Tibial artery (tissue), 4 donors: ENCODE measurements at regions of chr10 and their contacts with region 1.

Region 1: DNA sequence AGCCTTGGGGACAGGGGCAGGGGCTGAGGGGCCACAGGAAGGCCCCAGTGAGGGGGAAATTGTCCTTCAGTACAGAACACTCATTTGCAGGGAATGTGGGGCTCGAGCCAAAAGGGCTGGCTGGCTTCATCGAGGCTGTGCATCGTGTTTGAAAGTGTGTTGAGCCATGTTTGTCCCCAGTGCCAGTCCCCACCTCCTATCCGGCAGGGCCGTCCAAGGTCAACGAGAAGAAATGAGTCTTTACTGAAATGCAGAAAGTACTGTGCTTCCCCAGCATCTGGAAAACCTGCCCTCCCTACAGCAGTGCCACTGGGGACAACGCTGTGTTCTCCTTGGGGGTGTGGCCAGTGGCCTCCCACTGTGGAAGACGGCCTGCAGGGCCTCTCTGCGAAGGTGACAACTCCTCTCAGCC is 214.1 kb downstream of the KLF6 start:
- DNase-seq: peak; percentile 34 to 74
- H3K4me3 ChIP-seq: no peak overlapping the region
- H3K27ac ChIP-seq: peak overlapping the region; percentile 17 to 32
- H3K4me1 ChIP-seq: peaks cover 0 to 20% (median 11%) of the 10 kb centered on the region in 4 donors
- H3K27me3 ChIP-seq: no peaks in the 10 kb centered on the region
- CTCF ChIP-seq: no peak

Region 2: DNA sequence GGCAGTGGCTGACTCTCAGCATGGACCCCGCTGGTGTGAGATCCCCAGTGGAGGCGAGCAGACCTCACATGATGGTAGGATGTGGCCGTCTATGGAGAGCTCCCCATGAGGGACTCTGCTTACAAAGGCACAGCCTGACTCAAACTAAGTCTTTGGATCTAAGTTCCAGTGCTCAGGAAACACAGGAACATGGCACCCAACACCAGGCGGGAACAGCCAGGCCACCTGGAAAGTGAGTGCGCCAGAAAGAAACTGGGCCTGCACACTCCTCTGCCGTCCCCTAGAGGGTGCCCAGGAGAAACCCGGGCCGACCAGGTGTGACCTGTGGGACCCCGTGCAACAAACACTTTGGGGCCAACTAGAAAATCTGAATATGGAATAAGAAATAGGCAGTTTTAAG is 408.3 kb before region 1 on chr10:
- intact Hi-C with region 1: no loop called
- DNase-seq: no peak
- H3K4me3 ChIP-seq: no peak overlapping the region
- H3K27ac ChIP-seq: no peak overlapping the region
- H3K4me1 ChIP-seq: no peaks in the 10 kb centered on the region
- H3K27me3 ChIP-seq: no peaks in the 10 kb centered on the region
- CTCF ChIP-seq: no peak

Region 3: DNA sequence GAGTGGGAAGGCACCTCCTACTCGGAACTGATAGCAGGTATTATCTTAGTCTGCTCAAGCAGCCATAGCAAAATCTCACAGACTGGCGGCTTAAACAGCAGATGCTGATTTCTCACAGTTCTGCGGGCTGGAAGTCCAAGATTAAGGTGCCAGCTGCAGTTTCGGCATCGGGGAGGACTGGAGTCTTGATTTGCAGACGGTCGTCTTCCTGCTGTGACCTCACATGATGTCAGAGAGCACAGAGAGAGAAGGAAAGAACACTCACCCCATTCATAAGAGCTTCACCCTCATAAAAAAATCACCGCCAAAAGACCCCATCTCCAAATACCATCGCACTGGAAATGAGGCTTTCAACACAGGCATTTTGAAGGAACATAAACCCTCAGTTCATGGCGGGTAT is 181.7 kb before region 1 on chr10:
- intact Hi-C with region 1: loop called (anchors 10 kb)
- DNase-seq: no peak
- H3K4me3 ChIP-seq: no peak overlapping the region
- H3K27ac ChIP-seq: no peak overlapping the region
- H3K4me1 ChIP-seq: no peaks in the 10 kb centered on the region
- H3K27me3 ChIP-seq: no peaks in the 10 kb centered on the region
- CTCF ChIP-seq: no peak